Astrocyte of the cerebellum (primary cell): ENCODE measurements at regions of chr11 and their contacts with region 1.

Region 1: DNA sequence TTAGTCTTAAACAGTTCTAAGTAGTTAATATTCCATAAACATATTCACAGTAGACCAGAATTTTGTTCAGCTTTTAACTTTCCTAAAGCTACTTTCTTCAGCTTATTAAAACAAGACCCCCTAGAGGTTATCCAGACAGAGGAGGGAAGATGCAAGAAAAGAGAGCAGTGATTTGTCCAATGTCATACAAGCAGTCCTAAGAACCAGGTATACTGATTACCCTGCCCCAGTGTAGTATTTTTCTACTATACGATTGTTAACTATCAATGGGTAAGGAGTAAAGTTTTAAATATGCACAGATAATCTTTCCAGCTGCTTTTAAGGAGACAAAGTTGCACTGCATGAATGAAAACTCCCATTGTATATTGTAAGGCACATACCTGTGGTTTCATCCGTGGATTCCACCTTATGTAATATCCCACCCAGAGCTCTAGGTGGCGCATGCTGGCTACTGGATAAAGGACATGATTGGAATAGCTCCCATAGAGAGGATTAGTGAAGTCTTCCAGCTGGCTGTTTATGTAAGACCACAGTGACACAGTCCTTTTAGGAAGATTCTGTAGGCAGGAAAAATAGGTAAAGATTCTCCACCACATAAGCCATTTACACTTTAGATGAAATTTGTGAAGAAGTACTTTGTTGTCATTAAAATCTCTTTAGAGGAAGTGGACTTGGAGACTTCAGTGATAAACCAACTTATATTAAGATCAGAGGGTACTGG is 45.6 kb downstream of the CEP57 start:
- DNase-seq: peak; percentile 95
- H3K4me3 ChIP-seq: no peak overlapping the region
- CTCF ChIP-seq: peak; percentile 87

Region 2: DNA sequence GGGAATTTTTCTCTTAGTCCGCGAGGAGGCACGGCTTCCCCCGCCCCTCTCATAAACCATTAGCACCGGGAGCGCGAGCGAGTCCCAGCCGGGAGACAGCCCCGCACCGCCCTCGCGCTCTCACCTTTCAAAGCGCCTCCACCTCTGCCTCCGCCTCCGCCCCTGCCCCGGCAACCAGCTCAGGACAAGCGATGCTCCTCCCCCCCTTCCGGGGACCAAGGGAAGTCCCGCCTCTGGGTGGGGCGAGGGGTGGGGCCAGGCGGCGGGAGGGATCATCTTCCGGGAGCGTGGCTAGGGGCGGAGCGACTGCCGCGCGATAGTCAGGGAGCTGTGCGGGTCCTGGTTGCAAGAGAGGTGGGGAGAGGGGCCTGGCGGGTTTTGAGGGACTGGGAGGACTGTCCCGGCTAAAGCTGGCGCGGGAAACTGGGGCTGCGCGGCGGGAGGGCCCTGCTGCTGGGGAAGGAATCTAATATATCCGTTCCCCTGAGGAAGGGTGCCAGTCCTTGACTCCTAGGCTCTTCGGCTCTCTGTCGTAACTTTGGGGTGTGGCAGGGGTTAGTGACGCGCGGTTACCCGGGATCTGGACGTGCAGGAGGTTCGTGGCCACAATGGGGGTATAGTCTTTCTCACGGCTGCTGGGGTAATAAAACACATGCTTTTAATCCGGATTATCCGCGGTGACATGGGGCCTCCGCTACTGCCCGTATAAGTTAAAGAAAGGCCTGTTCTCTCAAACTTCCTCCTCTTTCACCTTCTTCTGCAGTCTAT is 554.0 kb after region 1 on chr11 and contains the starts of genes CCDC82 and JRKL:
- in situ Hi-C with region 1: loop called (anchors 25 kb)
- DNase-seq: peak; percentile 85
- H3K4me3 ChIP-seq: peak within 1 kb of the TSS; percentile 70
- CTCF ChIP-seq: no peak